A673 (cell line): ENCODE measurements at regions of chr21 and their contacts with region 1.

Region 1: DNA sequence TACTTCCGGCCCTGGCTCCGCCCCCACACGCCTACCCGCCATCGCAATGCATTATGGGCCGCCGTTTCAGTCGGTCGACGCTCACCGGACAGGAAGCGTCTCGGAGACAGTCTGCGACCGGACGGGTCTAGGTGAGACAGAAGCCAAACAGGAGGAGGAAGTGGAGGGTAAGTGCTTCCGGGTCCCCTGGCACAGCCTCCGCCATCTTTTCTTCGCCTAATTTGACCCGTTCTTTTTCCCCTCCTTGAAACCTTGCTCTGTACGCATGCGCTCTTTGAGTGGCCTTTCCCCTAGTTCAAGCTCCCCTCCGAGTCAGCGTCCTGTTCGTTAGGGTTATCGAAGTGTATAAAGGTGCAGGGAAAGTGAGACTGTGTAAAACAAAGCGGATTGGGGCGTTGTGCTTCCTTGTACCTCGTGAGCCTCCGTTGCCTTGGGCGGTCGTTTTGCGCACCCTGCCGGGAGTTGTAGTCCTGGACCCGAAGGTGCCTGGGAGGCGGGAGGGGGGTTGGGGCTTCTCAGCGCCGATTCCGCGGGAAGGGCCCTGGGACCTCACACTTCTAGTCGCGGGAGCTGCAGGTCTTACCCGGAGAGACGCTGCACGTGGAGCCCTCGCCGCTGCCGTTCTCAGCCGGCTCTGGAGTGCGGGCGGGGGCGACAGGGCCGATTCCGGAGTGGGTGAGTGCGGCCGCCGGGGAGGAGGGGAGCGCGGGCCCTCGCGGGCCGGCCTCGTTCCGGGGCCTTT is at the starts of genes ATP5PF and GABPA:
- DNase-seq: peak; percentile 99
- H3K4me3 ChIP-seq: peak within 1 kb of the TSS; percentile 89
- H3K27ac ChIP-seq: peak within 1 kb of the TSS; percentile 99
- H3K4me1 ChIP-seq: peaks cover 16% of the 10 kb centered on the region
- H3K27me3 ChIP-seq: no peaks in the 10 kb centered on the region
- CTCF ChIP-seq: no peak
- total RNA-seq, gene ATP5PF: 173 and 185 TPM in 2 replicates
- total RNA-seq, gene GABPA: 23.9 and 26.2 TPM in 2 replicates

Region 2: GRCh38 chr21:25862596-25862995 is 127.5 kb after region 1 on chr21:
- CTCF ChIA-PET with region 1: no interaction called
- POLR2A ChIA-PET with region 1: no interaction called
- intact Hi-C with region 1: loop called (anchors 10 kb)
- DNase-seq: peak; percentile 56
- H3K4me3 ChIP-seq: no peak overlapping the region
- H3K27ac ChIP-seq: no peak overlapping the region
- H3K4me1 ChIP-seq: peaks cover 24% of the 10 kb centered on the region
- H3K27me3 ChIP-seq: no peaks in the 10 kb centered on the region
- CTCF ChIP-seq: peak; percentile 83